Activated naive CD4-positive, alpha-beta T cell treated with anti-CD3 and anti-CD28 coated beads for 36 hours (primary cell): ENCODE measurements at regions of chr5 and their contacts with region 1.

Region 1: GRCh38 chr5:109479260-109479860 is 69.6 kb upstream of the PJA2 start:
- DNase-seq: no peak
- H3K4me3 Mint-ChIP-seq: no peak overlapping the region
- H3K27ac Mint-ChIP-seq: no peak overlapping the region
- H3K4me1 Mint-ChIP-seq: no peaks in the 10 kb centered on the region
- H3K27me3 Mint-ChIP-seq: no peaks in the 10 kb centered on the region

Region 2: GRCh38 chr5:108260117-108260857 is 1219.1 kb before region 1 on chr5:
- CTCF ChIA-PET with region 1: no interaction called
- intact Hi-C with region 1: loop called (anchors 10 kb)
- DNase-seq: peak; percentile 83
- H3K4me3 Mint-ChIP-seq: peak overlapping the region; percentile 48
- H3K27ac Mint-ChIP-seq: no peak overlapping the region
- H3K4me1 Mint-ChIP-seq: peaks cover 9% of the 10 kb centered on the region
- H3K27me3 Mint-ChIP-seq: no peaks in the 10 kb centered on the region

Region 3: GRCh38 chr5:108521841-108522506 is 957.4 kb before region 1 on chr5:
- CTCF ChIA-PET with region 1: no interaction called
- intact Hi-C with region 1: loop called (anchors 1 kb)
- DNase-seq: peak; percentile 23
- H3K4me3 Mint-ChIP-seq: no peak overlapping the region
- H3K27ac Mint-ChIP-seq: no peak overlapping the region
- H3K4me1 Mint-ChIP-seq: no peaks in the 10 kb centered on the region
- H3K27me3 Mint-ChIP-seq: peaks cover 2% of the 10 kb centered on the region

Region 4: DNA sequence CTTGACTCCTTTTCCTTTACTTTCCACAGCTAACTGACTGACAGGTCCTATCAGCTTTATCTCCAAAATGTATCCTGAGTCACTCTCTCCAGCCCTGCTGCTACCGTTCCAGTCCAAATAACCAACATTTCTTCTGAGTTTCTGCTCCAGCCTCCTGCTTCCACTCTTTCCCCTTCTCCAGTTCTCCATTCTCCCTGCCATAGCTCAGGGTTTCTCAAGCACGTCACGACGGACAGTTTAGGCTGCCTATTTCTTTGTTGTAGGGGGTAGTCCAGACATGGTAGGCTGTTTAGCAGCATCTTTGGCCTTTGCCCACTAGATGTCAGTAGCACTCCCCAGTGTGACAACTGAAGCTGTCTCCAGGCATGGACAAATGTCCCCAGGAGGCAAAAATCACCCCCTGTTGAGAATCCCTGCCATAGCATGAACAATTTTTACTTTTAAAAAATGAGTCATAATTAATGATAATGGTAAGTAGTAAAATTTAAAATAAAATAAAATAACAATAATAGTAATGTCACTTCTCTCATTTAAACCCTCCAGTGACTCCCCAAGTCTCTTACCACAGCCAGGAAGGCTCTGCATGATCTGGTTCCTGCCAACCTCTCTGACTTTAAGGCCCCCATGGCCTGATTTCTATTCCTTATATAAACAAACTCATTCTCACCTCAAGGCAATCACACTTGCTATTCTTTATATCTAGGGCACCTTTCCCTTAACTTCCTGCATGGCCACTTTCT is 837.0 kb before region 1 on chr5:
- CTCF ChIA-PET with region 1: interaction called, 3 read pairs
- intact Hi-C with region 1: loop called (anchors 1 kb)
- DNase-seq: peak; percentile 77
- H3K4me3 Mint-ChIP-seq: peak overlapping the region; percentile 16
- H3K27ac Mint-ChIP-seq: no peak overlapping the region
- H3K4me1 Mint-ChIP-seq: peaks cover 2% of the 10 kb centered on the region
- H3K27me3 Mint-ChIP-seq: peaks cover 14% of the 10 kb centered on the region

Region 5: GRCh38 chr5:108681079-108681921 is 798.1 kb before region 1 on chr5:
- CTCF ChIA-PET with region 1: no interaction called
- intact Hi-C with region 1: loop called (anchors 1 kb)
- DNase-seq: peak; percentile 48
- H3K4me3 Mint-ChIP-seq: no peak overlapping the region
- H3K27ac Mint-ChIP-seq: no peak overlapping the region
- H3K4me1 Mint-ChIP-seq: no peaks in the 10 kb centered on the region
- H3K27me3 Mint-ChIP-seq: no peaks in the 10 kb centered on the region

Region 6: DNA sequence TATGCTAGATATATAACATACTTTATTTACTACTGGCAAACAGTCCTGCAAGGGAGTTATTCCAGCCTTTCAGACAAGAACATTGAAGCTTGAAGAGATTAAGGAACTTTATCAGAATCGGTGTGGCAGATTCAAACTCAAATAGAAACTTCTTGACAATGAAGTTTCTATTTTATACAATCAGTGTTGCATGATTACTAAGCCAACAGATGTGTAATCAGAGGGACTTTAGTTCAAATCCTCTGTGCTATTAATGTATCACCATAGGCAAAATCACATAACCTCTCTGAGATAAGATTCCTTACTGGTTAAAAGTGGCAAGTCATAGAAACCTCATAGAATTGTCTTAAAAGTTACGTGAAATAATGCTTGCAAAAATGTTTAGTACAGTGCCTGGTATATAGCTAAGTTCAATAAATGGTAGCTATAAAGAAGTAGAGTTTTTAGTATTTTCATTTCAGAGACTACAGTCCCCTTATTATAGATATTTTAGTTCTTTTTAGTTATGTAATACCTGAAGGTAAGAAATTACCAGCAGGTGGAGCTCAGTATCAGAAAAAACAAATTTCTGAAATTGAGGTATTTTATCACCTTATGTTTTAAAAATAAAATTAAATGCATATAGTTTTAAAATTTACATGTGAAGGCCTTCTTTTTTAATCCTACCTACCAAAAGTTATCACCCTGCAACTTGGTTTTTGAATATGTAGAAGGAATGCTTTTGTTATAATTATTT is 559.6 kb before region 1 on chr5:
- CTCF ChIA-PET with region 1: no interaction called
- intact Hi-C with region 1: loop called (anchors 2 kb)
- DNase-seq: no peak
- H3K4me3 Mint-ChIP-seq: no peak overlapping the region
- H3K27ac Mint-ChIP-seq: no peak overlapping the region
- H3K4me1 Mint-ChIP-seq: peaks cover 2% of the 10 kb centered on the region
- H3K27me3 Mint-ChIP-seq: no peaks in the 10 kb centered on the region

Region 7: GRCh38 chr5:109304309-109304708 is 175.1 kb before region 1 on chr5:
- CTCF ChIA-PET with region 1: no interaction called
- intact Hi-C with region 1: loop called (anchors 1 kb)
- DNase-seq: no peak
- H3K4me3 Mint-ChIP-seq: no peak overlapping the region
- H3K27ac Mint-ChIP-seq: no peak overlapping the region
- H3K4me1 Mint-ChIP-seq: no peaks in the 10 kb centered on the region
- H3K27me3 Mint-ChIP-seq: peaks cover 2% of the 10 kb centered on the region